CD4-positive, alpha-beta memory T cell (primary cell): ENCODE measurements at regions of chr5 and their contacts with region 1.

Region 1: DNA sequence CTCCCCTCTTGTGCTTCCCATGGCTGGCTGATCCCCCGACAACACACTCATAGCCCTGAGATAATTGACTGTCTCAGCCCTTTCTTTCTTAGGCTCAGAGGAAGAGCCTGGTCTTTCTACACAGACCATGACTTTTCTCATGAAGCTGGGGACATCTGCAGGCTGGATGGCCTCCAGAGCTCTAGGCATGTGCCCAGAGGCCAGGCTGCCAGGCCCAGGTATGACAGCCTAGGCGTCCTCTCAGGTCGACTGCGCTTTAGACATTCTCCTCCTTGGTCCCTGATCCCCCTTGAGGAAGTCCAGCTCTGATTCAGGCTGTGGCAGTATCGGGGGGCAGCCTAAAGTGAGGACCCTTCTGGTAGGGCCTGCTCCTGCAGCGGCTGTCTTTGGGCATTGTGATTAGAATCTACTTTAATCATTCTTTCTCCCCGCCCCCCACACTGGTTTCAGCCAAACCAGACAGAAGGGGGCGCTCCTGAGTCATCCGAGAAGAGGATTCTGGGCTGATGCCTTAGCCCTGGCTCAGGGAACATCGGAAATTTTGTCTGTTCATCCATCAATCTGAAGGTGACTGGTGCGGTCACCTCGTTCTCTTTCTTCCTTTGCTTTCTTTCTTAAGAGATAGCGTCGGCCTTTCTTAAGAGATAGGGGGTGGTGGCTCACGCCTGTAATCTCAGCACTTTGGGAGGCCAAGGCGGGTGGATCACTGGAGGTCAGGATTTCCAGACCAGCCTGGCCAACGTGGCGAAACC is 66.5 kb upstream of the HSPA9 start:
- DNase-seq: peak; percentile 51 to 66 (median 59)
- H3K4me3 ChIP-seq: no peak overlapping the region
- H3K4me3 Mint-ChIP-seq: no peak overlapping the region
- H3K27ac ChIP-seq: no peak overlapping the region
- H3K27ac Mint-ChIP-seq: no peak overlapping the region
- H3K4me1 ChIP-seq: no peaks in the 10 kb centered on the region
- H3K4me1 Mint-ChIP-seq: peaks cover 0 to 4% (median 1%) of the 10 kb centered on the region in 4 donors
- H3K27me3 ChIP-seq: peaks cover 41% of the 10 kb centered on the region
- H3K27me3 Mint-ChIP-seq: peaks cover 62 to 71% of the 10 kb centered on the region in 2 donors

Region 2: DNA sequence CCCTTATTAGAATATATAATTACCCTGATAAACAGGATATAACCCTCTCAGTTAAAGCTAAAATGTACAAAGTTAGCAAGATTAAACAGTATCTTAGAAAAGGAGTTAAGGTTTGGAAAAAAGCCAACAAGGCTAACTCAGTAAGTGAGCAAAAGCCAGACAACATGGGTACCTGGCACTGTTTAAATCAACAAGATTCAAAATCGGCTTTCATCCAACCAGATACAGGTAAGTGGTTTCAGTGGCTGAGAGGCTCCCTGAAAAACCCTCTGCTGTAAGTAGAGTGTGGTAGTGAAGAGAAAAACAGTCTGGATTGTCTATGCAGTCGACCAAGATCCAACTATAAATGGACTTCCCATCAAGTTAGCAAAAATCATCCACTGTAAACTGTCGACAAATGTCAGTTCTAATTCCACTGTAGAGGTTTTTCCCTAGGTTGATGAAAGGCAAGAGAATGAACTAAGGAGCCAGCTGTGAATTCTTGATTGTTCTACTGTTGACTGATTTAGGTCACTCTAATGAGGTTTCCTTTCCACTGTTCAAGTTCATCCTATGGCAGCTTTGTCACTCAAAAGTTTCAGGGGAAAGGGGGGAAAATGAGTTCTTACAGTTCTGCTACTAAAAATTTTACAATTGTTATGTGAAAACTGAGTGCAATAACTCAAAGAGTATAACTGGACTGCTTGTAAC is 126.0 kb before region 1 on chr5:
- CTCF ChIA-PET with region 1: no interaction called
- POLR2A ChIA-PET with region 1: no interaction called
- intact Hi-C with region 1: no loop called
- DNase-seq: no peak
- H3K4me3 ChIP-seq: no peak overlapping the region
- H3K4me3 Mint-ChIP-seq: no peak overlapping the region
- H3K27ac ChIP-seq: no peak overlapping the region
- H3K27ac Mint-ChIP-seq: peak overlapping the region in 3 of 7 donors; percentile 10 to 70 (median 50)
- H3K4me1 ChIP-seq: no peaks in the 10 kb centered on the region
- H3K4me1 Mint-ChIP-seq: peaks cover 12 to 13% (median 12%) of the 10 kb centered on the region in 4 donors
- H3K27me3 ChIP-seq: no peaks in the 10 kb centered on the region
- H3K27me3 Mint-ChIP-seq: no peaks in the 10 kb centered on the region

Region 3: GRCh38 chr5:138610918-138611677 is 30.6 kb before region 1 on chr5:
- CTCF ChIA-PET with region 1: no interaction called
- POLR2A ChIA-PET with region 1: no interaction called
- intact Hi-C with region 1: no loop called
- DNase-seq: no peak
- H3K4me3 ChIP-seq: no peak overlapping the region
- H3K4me3 Mint-ChIP-seq: peak overlapping the region in 5 of 8 donors; percentile 6 to 58 (median 33)
- H3K27ac ChIP-seq: no peak overlapping the region
- H3K27ac Mint-ChIP-seq: no peak overlapping the region
- H3K4me1 ChIP-seq: peaks cover 10% of the 10 kb centered on the region
- H3K4me1 Mint-ChIP-seq: peaks cover 6 to 14% (median 9%) of the 10 kb centered on the region in 4 donors
- H3K27me3 ChIP-seq: no peaks in the 10 kb centered on the region
- H3K27me3 Mint-ChIP-seq: peaks cover 27 to 30% of the 10 kb centered on the region in 2 donors

Region 4: GRCh38 chr5:138654281-138654867 is 12.7 kb after region 1 on chr5:
- CTCF ChIA-PET with region 1: interaction called, 12 read pairs
- POLR2A ChIA-PET with region 1: no interaction called
- intact Hi-C with region 1: no loop called
- DNase-seq: peak; percentile 80 to 87 (median 81)
- H3K4me3 ChIP-seq: no peak overlapping the region
- H3K4me3 Mint-ChIP-seq: peak overlapping the region in 6 of 8 donors; percentile 9 to 78 (median 52)
- H3K27ac ChIP-seq: no peak overlapping the region
- H3K27ac Mint-ChIP-seq: peak overlapping the region; percentile 19 to 93 (median 48)
- H3K4me1 ChIP-seq: peaks cover 26% of the 10 kb centered on the region
- H3K4me1 Mint-ChIP-seq: peaks cover 17 to 35% (median 24%) of the 10 kb centered on the region in 4 donors
- H3K27me3 ChIP-seq: peaks cover 79% of the 10 kb centered on the region
- H3K27me3 Mint-ChIP-seq: peaks cover 63 to 75% of the 10 kb centered on the region in 2 donors

Region 5: DNA sequence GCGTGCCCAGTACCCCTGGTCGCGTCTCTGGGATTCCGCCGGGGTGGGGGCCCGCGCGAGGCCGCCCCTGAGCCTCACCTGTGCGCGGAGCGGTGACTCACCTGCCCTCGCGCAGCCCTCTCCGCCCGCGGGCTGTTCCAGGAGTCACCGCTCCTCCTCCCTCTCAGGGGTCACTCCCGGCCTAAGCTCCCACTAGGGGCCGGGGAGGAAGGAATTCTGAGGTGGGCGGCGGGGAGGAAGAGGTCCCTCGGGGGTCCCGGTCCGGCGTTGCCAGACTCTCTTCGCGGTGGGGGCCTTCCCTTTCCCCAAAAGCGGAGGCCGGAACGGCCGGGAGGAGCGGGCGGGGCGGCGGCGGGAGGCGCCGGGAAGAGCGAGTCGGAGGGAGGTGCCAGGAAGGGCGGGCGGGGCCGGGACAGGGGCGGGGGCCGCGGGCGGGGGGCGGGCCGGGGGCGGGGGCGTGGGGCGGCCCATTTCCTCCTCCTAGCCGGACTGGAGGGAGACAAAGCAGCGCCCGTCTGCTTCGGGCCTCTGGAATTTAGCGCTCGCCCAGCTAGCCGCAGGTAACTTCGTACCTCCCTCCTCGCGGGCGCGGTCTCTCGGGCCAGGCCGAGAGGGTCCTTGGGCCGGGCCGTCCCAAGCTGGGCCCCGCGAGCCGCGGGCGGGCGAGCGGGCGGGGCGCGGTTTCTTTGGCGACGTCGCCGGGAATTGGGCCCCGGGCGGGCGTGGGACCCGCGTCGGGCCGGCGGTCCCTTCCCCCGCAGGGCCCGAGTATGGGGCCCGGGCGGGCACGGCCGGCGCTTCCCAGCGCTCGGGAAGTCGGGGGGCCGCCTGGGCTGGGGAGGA is 111.4 kb after region 1 on chr5 and contains the start of gene CTNNA1:
- CTCF ChIA-PET with region 1: interaction called, 3 read pairs
- POLR2A ChIA-PET with region 1: no interaction called
- intact Hi-C with region 1: loop called (anchors 10 kb)
- DNase-seq: peak; percentile 35 to 60 (median 39)
- H3K4me3 ChIP-seq: peak within 1 kb of the TSS; percentile 65
- H3K4me3 Mint-ChIP-seq: peak within 1 kb of the TSS; percentile 79 to 89 (median 84)
- H3K27ac ChIP-seq: no peak within 1 kb of the TSS
- H3K27ac Mint-ChIP-seq: peak within 1 kb of the TSS in 6 of 7 donors; percentile 32 to 88 (median 67)
- H3K4me1 ChIP-seq: peaks cover 13% of the 10 kb centered on the region
- H3K4me1 Mint-ChIP-seq: peaks cover 12 to 36% (median 22%) of the 10 kb centered on the region in 4 donors
- H3K27me3 ChIP-seq: no peaks in the 10 kb centered on the region
- H3K27me3 Mint-ChIP-seq: peaks cover 8% of the 10 kb centered on the region in 2 donors
- total RNA-seq, gene CTNNA1: 22.7 to 26.1 TPM

Region 6: GRCh38 chr5:139262742-139263445 is 621.2 kb after region 1 on chr5:
- CTCF ChIA-PET with region 1: interaction called, 8 read pairs
- POLR2A ChIA-PET with region 1: no interaction called
- intact Hi-C with region 1: loop called (anchors 1 kb)
- DNase-seq: peak; percentile 46 to 62 (median 53)
- H3K4me3 ChIP-seq: no peak overlapping the region
- H3K4me3 Mint-ChIP-seq: no peak overlapping the region
- H3K27ac ChIP-seq: no peak overlapping the region
- H3K27ac Mint-ChIP-seq: peak overlapping the region in 3 of 7 donors; percentile 19 to 46 (median 30)
- H3K4me1 ChIP-seq: no peaks in the 10 kb centered on the region
- H3K4me1 Mint-ChIP-seq: peaks cover 1 to 5% (median 1%) of the 10 kb centered on the region in 4 donors
- H3K27me3 ChIP-seq: no peaks in the 10 kb centered on the region
- H3K27me3 Mint-ChIP-seq: peaks cover 2 to 5% of the 10 kb centered on the region in 2 donors